K562 (cell line): ENCODE measurements at regions of chrX and their contacts with region 1.

Region 1: GRCh38 chrX:134727371-134727770 is 69.1 kb upstream of the PLAC1 start:
- DNase-seq: no peak
- ATAC-seq: peak; percentile 71
- H3K4me3 ChIP-seq: no peak overlapping the region
- H3K27ac ChIP-seq: no peak overlapping the region
- H3K4me1 ChIP-seq: no peaks in the 10 kb centered on the region
- H3K27me3 ChIP-seq: no peaks in the 10 kb centered on the region; a peak in 2 of 5 replicates
- CTCF ChIP-seq: peak; percentile 24 to 34 (median 33); a peak in 3 of 6 replicates
- EP300 ChIP-seq: no peak
- POLR2A ChIP-seq: no peak
- RAD21 ChIP-seq: peak in 1 of 2 experiments; percentile 52; a peak in 2 of 4 replicates

Region 2: GRCh38 chrX:134743091-134743490 is 15.7 kb after region 1 on chrX:
- CTCF ChIA-PET with region 1: no interaction called
- POLR2A ChIA-PET with region 1: no interaction called
- in situ Hi-C with region 1: no loop called
- intact Hi-C with region 1: no loop called
- DNase-seq: no peak
- ATAC-seq: no peak
- H3K4me3 ChIP-seq: no peak overlapping the region
- H3K27ac ChIP-seq: no peak overlapping the region
- H3K4me1 ChIP-seq: peaks cover 0 to 19% of the 10 kb centered on the region in 2 experiments; a peak in 4 of 5 replicates
- H3K27me3 ChIP-seq: no peaks in the 10 kb centered on the region
- CTCF ChIP-seq: no peak
- EP300 ChIP-seq: no peak
- POLR2A ChIP-seq: no peak
- RAD21 ChIP-seq: no peak

Region 3: DNA sequence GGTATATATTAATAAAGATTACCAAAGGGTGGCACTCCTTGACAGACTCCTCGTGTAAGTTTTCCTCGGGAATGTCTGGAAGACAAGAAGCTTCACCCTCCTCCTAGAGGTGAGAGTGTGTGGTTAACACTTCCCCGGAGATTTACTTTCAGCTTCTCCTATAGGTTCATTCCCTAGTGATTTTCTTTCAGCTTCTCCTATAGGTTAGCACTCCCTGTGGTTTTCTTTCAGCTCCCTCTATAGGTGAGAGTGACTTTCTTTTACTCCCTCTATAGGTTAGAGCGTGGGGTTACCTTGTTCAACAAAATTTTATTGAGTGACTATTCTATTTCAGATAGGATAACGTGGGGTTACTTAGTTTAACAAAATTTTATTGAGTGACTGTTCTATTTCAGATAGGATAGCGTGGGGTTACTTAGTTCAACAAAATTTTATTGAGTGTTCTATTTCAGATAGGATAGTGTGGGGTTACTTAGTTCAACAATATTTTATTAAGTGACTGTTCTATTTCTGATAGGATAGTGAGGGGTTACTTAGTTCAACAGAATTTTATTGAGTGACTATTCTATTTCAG is 36.9 kb after region 1 on chrX:
- CTCF ChIA-PET with region 1: no interaction called
- POLR2A ChIA-PET with region 1: no interaction called
- in situ Hi-C with region 1: no loop called
- intact Hi-C with region 1: loop called (anchors 5 kb)
- DNase-seq: peak; percentile 59 to 88 (median 72)
- ATAC-seq: peak; percentile 99
- H3K4me3 ChIP-seq: no peak overlapping the region
- H3K27ac ChIP-seq: no peak overlapping the region
- H3K4me1 ChIP-seq: no peaks in the 10 kb centered on the region
- H3K27me3 ChIP-seq: no peaks in the 10 kb centered on the region
- CTCF ChIP-seq: peak; percentile 56 to 92 (median 84); a peak in 5 of 6 replicates
- EP300 ChIP-seq: no peak
- POLR2A ChIP-seq: no peak
- RAD21 ChIP-seq: peak; percentile 16 to 48; a peak in 3 of 4 replicates